AG04449 (cell line): ENCODE measurements at regions of chr3 and their contacts with region 1.

Region 1: GRCh38 chr3:153161138-153161713 is 800 bp upstream of the RAP2B start:
- DNase-seq: peak; percentile 100
- H3K4me3 ChIP-seq: peak overlapping the region; percentile 96
- CTCF ChIP-seq: no peak

Region 2: DNA sequence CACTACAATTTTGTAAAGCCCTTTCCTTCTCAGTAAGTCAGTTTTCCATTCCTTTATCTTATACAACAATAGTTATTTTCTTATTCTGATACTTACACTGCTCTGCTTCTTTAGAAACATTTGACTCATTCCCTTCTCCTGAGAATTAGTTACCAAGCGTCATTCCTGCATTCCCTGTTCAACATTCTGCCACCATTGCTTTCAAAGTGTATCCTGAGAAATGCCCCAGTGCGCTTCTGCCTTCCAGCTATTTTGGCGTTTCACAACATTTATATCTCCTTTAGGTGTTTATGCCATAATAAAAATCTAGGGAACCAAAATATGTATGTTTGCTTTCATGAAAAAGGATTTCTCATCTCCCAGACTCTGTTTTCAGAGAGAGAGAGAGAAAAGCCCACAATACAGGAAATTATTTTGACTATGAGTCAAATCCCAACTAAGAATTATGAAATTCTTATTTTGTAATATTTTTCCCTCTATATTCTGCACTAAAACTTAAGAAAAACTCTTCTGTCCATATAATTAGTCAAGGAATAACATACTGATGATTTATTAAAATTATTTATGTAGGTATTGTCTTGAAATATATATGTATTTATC is 117.4 kb before region 1 on chr3:
- CTCF ChIA-PET with region 1: interaction called, 91 read pairs
- POLR2A ChIA-PET with region 1: interaction called, 15 read pairs
- DNase-seq: no peak
- H3K4me3 ChIP-seq: no peak overlapping the region
- CTCF ChIP-seq: no peak

Region 3: GRCh38 chr3:153052096-153052460 is 109.1 kb before region 1 on chr3:
- CTCF ChIA-PET with region 1: interaction called, 19 read pairs
- POLR2A ChIA-PET with region 1: interaction called, 10 read pairs
- DNase-seq: peak; percentile 72
- H3K4me3 ChIP-seq: no peak overlapping the region
- CTCF ChIP-seq: no peak

Region 4: DNA sequence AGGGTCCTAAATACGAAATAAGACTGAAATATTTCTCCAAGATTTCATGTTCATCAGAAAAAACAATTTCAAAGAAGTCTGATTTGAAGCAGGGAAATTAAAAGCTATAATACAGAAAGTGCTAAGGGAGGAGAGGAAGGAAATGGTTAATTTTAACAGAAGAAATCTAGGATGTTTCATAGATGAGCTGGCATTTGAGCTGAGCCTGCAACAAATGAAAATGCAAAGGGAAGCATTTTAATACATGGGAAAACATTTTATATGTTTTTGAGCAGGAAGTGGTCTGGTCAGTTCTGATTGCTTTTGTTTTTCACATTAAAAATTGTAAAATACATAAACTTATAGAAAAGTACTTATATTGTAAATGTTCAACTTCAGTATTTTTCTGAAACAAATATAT is 16.4 kb before region 1 on chr3:
- CTCF ChIA-PET with region 1: interaction called, 6 read pairs
- POLR2A ChIA-PET with region 1: interaction called, 11 read pairs
- DNase-seq: peak; percentile 23
- H3K4me3 ChIP-seq: no peak overlapping the region
- CTCF ChIP-seq: no peak

Region 5: GRCh38 chr3:153284282-153284938 is 123.2 kb after region 1 on chr3:
- CTCF ChIA-PET with region 1: interaction called, 11 read pairs
- POLR2A ChIA-PET with region 1: interaction called, 8 read pairs
- DNase-seq: peak; percentile 72
- H3K4me3 ChIP-seq: no peak overlapping the region
- CTCF ChIP-seq: no peak